Motor neuron (in vitro differentiated cells): ENCODE measurements at regions of chr14 and their contacts with region 1.

Region 1: DNA sequence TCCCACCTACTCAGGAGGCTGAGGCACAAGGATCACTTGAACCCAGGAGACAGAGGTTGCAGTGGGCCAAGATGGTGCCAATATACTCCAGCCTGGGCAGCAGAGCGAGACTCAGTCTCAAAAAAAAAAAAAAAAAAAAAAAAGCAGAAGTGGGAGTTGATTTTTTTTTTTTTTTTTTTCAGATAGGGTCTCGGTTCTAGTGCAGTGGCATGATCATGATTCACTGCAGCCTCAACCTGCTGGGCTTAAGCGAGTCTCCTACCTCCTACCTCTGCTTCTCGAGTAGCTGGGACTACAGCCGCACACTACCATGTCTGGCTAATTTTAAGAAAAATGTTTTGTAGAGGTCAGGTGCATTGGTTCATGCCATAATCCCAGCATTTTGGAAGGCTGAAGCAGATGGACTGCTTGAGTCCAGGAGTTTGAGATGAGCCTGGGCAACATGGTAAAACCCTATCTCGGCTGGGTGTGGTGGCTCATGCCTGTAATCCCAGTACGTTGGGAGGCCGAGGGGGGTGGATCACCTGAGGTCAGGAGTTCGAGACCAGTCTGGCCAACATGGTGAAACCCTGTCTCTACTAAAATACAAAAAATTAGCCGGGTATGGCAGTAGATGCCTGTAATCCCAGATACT is 16.3 kb upstream of the HSP90AA1 start:
- ATAC-seq: no peak
- H3K4me3 ChIP-seq: no peak overlapping the region
- H3K27ac ChIP-seq: no peak overlapping the region
- H3K4me1 ChIP-seq: no peaks in the 10 kb centered on the region

Region 2: GRCh38 chr14:101707068-101707842 is 395.9 kb before region 1 on chr14:
- in situ Hi-C with region 1: loop called in 1 of 9 experiments (anchors 25 kb)
- ATAC-seq: peak; percentile 9 to 77 (median 46)
- H3K4me3 ChIP-seq: no peak overlapping the region
- H3K27ac ChIP-seq: no peak overlapping the region
- H3K4me1 ChIP-seq: peaks cover 3 to 9% of the 10 kb centered on the region in 2 donors